ENCODE measurements at regions of chr7 and their contacts with region 1.

Region 1: GRCh38 chr7:974820-975681 is at the start of gene COX19:
- DNase-seq: peak; percentile 100
- H3K4me3 ChIP-seq: peak within 1 kb of the TSS; percentile 75 to 83
- H3K27ac ChIP-seq: peak within 1 kb of the TSS; percentile 79 to 91
- H3K4me1 ChIP-seq: peaks cover 6 to 12% of the 10 kb centered on the region in 2 experiments; a peak in 2 of 4 replicates
- H3K27me3 ChIP-seq: no peaks in the 10 kb centered on the region
- CTCF ChIP-seq: no peak
- EP300 ChIP-seq: no peak
- RAD21 ChIP-seq: no peak
- polyA plus RNA-seq, gene COX19: 7.6 TPM in 2 replicates

Region 2: DNA sequence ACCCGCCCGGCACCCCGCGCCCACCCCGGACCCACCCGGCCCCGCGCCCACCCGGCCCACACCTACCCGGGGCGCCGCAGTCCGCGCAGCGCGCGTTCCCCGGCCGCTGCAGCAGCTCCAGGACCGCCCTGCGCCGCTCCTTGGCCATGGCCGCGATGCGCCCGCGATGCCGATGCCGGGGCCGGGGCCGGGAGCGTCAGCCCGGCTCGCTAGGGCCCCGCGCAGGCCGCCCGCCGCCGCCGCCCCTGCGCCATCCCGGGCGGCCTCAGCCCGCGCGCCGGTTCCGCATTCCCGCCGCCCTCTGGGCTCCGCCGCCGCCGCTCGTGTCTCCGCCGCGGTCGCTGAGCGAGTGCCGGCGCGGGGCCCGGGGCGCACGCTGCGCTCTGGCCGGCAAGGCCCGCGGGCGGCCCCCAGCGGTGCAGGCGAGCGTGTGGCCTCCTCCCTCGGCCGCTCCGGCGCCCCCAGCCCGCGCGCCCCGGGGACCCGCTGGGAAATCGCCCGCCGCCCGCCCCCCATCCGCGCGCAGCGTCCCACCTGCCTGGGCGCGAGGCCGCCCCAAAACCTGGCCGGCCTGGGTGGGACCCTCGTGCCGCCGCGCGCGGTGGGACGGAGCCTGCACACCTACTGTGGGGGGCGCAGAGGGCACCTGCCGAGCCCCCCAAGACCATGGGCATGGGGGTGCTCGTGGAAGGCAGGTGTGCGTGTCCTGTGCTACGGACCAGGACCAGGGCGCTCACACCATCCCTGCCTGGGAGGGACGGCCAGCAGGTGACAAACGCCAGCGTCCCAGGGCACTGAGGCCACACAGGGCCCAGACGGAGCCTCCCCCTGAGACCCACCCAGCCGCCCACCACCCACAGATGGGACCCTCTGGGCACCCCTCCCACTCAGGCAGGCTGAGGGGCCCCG is 20.5 kb before region 1 on chr7 and contains the start of gene ADAP1:
- CTCF ChIA-PET with region 1: interaction called, 15 read pairs
- POLR2A ChIA-PET with region 1: no interaction called
- DNase-seq: peak; percentile 92
- H3K4me3 ChIP-seq: peak within 1 kb of the TSS; percentile 42 to 59
- H3K27ac ChIP-seq: no peak within 1 kb of the TSS
- H3K4me1 ChIP-seq: peaks cover 0 to 4% of the 10 kb centered on the region in 2 experiments; a peak in 1 of 4 replicates
- H3K27me3 ChIP-seq: peaks cover 11% of the 10 kb centered on the region; the same call in 1 of the 2 replicates
- CTCF ChIP-seq: peak; percentile 11; the same call in 1 of the 2 replicates
- EP300 ChIP-seq: no peak
- RAD21 ChIP-seq: peak; percentile 45
- polyA plus RNA-seq, gene ADAP1: 3.2 and 5.4 TPM in 2 replicates

Region 3: GRCh38 chr7:964401-965231 is 10.4 kb before region 1 on chr7:
- CTCF ChIA-PET with region 1: interaction called, 18 read pairs
- POLR2A ChIA-PET with region 1: interaction called, 6 read pairs
- DNase-seq: peak; percentile 89
- H3K4me3 ChIP-seq: no peak overlapping the region
- H3K27ac ChIP-seq: peak overlapping the region in 1 of 2 experiments; percentile 39; a peak in 2 of 4 replicates
- H3K4me1 ChIP-seq: peaks cover 4 to 24% of the 10 kb centered on the region in 2 experiments; a peak in 2 of 4 replicates
- H3K27me3 ChIP-seq: no peaks in the 10 kb centered on the region
- CTCF ChIP-seq: peak; percentile 50
- EP300 ChIP-seq: peak in 1 of 2 experiments; percentile 80; a peak in 2 of 4 replicates
- RAD21 ChIP-seq: peak; percentile 60

Region 4: GRCh38 chr7:1593091-1593866 is 618.2 kb after region 1 on chr7:
- CTCF ChIA-PET with region 1: no interaction called
- POLR2A ChIA-PET with region 1: no interaction called
- DNase-seq: peak; percentile 78
- H3K4me3 ChIP-seq: no peak overlapping the region
- H3K27ac ChIP-seq: peak overlapping the region in 1 of 2 experiments; percentile 85; a peak in 2 of 4 replicates
- H3K4me1 ChIP-seq: peaks cover 0 to 65% of the 10 kb centered on the region in 2 experiments; a peak in 1 of 4 replicates
- H3K27me3 ChIP-seq: peaks cover 50% of the 10 kb centered on the region
- CTCF ChIP-seq: peak; percentile 51
- EP300 ChIP-seq: peak in 1 of 2 experiments; percentile 40; a peak in 1 of 4 replicates
- RAD21 ChIP-seq: no peak

Measured in SK-N-SH (cell line).